ENCODE measurements at regions of chr5 and their contacts with region 1.

Region 1: GRCh38 chr5:15794052-15794985 is 294.3 kb downstream of the FBXL7 start:
- DNase-seq: no peak
- ATAC-seq: peak in 5 of 8 donors; percentile 25 to 73 (median 67)
- H3K4me3 ChIP-seq: no peak overlapping the region
- H3K27ac ChIP-seq: peak overlapping the region in 9 of 10 donors; percentile 15 to 69 (median 49)
- H3K4me1 ChIP-seq: peaks cover 5 to 90% (median 73%) of the 10 kb centered on the region in 9 donors
- H3K27me3 ChIP-seq: no peaks in the 10 kb centered on the region
- CTCF ChIP-seq: peak in 7 of 9 donors; percentile 27 to 60 (median 43)

Region 2: DNA sequence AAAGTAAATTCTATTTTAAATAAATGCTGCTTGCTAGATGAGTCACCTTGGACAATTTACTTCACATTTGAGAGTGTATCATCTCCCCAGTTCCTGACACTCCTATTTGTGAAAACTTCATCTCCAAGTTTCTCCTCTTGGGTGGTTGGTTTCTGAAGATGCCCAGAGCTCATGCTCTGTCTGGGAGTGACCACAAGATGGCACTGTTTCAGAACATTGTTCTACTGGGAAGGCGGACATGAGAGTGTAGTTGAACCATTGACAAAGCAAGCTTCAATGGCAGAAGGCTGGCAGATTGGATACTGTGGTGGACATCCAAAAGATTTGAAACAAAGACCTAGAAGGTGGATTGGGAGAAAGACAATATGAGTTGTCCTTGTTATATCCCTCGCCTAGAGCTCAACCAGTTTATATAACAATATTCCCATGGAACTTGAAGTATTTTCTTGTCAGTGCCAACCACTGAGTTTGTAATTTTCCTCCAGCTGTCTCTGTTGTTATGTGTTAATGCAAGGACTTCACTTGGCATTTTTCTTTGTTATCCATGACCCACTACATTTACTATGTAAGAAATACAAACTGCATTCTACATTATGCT is 688.4 kb before region 1 on chr5:
- intact Hi-C with region 1: loop called in 1 of 10 experiments (anchors 5 kb)
- DNase-seq: peak in 1 of 2 donors; percentile 45
- ATAC-seq: peak in 5 of 8 donors; percentile 52 to 70 (median 61)
- H3K4me3 ChIP-seq: no peak overlapping the region
- H3K27ac ChIP-seq: no peak overlapping the region
- H3K4me1 ChIP-seq: no peaks in the 10 kb centered on the region
- H3K27me3 ChIP-seq: no peaks in the 10 kb centered on the region
- CTCF ChIP-seq: peak; percentile 45 to 84 (median 75)

Region 3: DNA sequence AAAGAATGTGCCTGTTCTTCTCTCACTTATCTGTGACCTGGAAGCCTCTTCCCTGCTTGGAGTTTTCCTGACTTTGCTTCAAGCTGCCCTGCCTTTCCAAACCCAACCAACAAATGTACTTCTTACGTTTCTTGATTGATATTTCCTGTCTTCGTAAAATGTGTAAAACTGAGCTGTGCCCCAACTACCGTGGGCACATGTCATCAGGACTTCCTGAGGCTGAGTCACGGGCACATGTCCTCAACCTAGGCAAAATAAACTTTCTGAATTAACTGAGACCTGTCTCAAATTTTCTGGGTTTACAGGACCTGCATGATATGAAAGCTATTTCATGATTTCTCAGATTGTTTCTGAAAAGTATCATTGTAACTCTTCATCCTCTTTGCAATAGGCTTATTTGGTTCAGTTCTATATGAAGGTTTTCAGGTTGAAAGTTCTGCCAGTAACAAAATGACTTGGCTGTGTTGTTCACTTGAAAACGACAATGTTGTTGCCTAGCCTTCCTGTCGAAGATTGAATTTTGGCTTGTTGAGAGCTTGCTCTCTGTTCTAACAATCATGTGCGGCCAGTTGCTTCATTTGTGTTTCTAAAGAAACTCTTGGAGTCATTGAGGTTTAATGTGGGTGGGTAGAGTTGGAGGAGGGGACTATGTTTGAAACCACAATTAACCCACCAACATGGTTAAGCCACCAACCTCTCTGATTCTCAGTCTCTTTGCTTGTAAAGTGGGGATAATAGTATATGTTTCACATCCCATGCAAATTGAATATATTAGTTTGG is 148.7 kb before region 1 on chr5:
- intact Hi-C with region 1: no loop called
- DNase-seq: no peak
- ATAC-seq: no peak
- H3K4me3 ChIP-seq: no peak overlapping the region
- H3K27ac ChIP-seq: peak overlapping the region in 1 of 10 donors; percentile 8
- H3K4me1 ChIP-seq: peaks cover 7 to 55% (median 35%) of the 10 kb centered on the region in 9 donors
- H3K27me3 ChIP-seq: no peaks in the 10 kb centered on the region
- CTCF ChIP-seq: no peak

Region 4: DNA sequence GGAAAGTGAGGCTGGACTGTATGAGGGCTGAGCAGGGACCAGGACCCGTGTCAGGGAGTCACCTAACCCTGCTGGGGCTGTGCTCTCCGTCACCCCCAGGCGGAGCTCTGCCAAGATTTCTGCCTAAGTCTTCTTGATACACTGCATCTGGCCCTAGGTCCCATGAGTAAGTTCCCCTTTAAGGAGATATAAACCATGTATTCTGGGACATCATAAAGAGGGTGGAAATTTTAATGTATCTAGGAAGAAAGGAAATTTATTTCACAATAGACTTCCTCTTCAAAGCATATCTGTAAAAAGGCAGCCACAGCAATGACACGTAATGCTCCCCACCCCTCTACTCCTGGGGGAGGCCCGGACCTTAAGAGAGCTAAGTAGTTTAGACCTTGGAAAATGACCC is 111.0 kb before region 1 on chr5:
- intact Hi-C with region 1: no loop called
- DNase-seq: peak; percentile 31 to 47
- ATAC-seq: peak; percentile 46 to 81 (median 62)
- H3K4me3 ChIP-seq: no peak overlapping the region
- H3K27ac ChIP-seq: no peak overlapping the region
- H3K4me1 ChIP-seq: peaks cover 0 to 58% (median 19%) of the 10 kb centered on the region in 9 donors
- H3K27me3 ChIP-seq: no peaks in the 10 kb centered on the region
- CTCF ChIP-seq: peak in 6 of 9 donors; percentile 23 to 50 (median 29)

Region 5: GRCh38 chr5:15938961-15939360 is 144.6 kb after region 1 on chr5:
- intact Hi-C with region 1: no loop called
- DNase-seq: no peak
- ATAC-seq: no peak
- H3K4me3 ChIP-seq: no peak overlapping the region
- H3K27ac ChIP-seq: no peak overlapping the region
- H3K4me1 ChIP-seq: peaks cover 0 to 30% (median 8%) of the 10 kb centered on the region in 9 donors
- H3K27me3 ChIP-seq: no peaks in the 10 kb centered on the region
- CTCF ChIP-seq: no peak

Region 6: DNA sequence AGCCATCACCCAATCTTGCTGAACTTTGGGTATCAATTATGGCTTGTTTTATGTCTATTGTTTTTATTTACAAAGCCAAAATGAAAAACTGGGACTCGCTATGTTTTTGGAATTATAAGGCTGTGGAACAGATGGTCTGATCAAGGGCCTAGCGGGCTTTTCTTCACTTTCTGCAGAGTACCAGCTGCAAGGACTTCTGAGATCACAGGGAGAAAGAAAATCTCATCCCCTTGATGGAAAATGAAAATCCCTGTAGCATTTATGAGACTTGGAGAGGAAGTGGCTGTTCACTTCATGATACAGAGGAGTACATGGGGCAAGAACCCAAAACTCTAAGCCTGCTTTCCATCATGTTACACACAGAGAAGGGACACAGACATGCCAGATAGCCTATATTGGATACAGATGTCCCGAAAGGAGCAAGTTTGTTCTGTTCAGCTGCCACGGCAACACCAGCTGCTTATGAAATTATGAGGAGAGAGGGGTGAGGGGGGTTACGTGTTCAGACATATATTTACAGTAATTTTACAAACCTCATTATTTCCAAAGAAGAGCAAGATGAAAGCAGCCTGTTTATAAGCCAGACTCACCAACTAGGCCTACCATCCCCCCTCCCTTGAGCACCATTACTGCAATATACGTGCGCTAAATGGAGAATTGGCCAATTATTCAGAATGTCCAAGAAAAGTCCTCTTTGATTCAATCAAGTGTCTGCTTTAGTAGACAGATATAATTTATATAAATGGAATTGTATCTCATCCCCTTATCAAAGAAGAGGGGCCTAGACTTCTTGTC is 165.2 kb after region 1 on chr5:
- intact Hi-C with region 1: no loop called
- DNase-seq: no peak
- ATAC-seq: peak in 6 of 8 donors; percentile 22 to 81 (median 62)
- H3K4me3 ChIP-seq: no peak overlapping the region
- H3K27ac ChIP-seq: no peak overlapping the region
- H3K4me1 ChIP-seq: no peaks in the 10 kb centered on the region
- H3K27me3 ChIP-seq: no peaks in the 10 kb centered on the region
- CTCF ChIP-seq: no peak